ENCODE measurements at regions of chr5 and their contacts with region 1.

Region 1: GRCh38 chr5:32489791-32490582 is 45.4 kb upstream of the ZFR start:
- DNase-seq: peak; percentile 19
- ATAC-seq: peak; percentile 95
- H3K4me3 ChIP-seq: no peak overlapping the region
- H3K27ac ChIP-seq: no peak overlapping the region
- H3K4me1 ChIP-seq: no peaks in the 10 kb centered on the region
- H3K27me3 ChIP-seq: no peaks in the 10 kb centered on the region
- CTCF ChIP-seq: peak; percentile 67 to 81 (median 74)
- EP300 ChIP-seq: no peak
- POLR2A ChIP-seq: no peak
- RAD21 ChIP-seq: peak; percentile 96

Region 2: GRCh38 chr5:32346869-32347268 is 143.1 kb before region 1 on chr5:
- CTCF ChIA-PET with region 1: no interaction called
- POLR2A ChIA-PET with region 1: no interaction called
- RAD21 ChIA-PET with region 1: no interaction called
- SMC1A ChIA-PET with region 1: no interaction called
- in situ Hi-C with region 1: no loop called
- intact Hi-C with region 1: no loop called
- DNase-seq: no peak
- ATAC-seq: no peak
- H3K4me3 ChIP-seq: no peak overlapping the region
- H3K27ac ChIP-seq: no peak overlapping the region
- H3K4me1 ChIP-seq: no peaks in the 10 kb centered on the region
- H3K27me3 ChIP-seq: no peaks in the 10 kb centered on the region
- CTCF ChIP-seq: no peak
- EP300 ChIP-seq: no peak
- POLR2A ChIP-seq: no peak
- RAD21 ChIP-seq: no peak

Region 3: DNA sequence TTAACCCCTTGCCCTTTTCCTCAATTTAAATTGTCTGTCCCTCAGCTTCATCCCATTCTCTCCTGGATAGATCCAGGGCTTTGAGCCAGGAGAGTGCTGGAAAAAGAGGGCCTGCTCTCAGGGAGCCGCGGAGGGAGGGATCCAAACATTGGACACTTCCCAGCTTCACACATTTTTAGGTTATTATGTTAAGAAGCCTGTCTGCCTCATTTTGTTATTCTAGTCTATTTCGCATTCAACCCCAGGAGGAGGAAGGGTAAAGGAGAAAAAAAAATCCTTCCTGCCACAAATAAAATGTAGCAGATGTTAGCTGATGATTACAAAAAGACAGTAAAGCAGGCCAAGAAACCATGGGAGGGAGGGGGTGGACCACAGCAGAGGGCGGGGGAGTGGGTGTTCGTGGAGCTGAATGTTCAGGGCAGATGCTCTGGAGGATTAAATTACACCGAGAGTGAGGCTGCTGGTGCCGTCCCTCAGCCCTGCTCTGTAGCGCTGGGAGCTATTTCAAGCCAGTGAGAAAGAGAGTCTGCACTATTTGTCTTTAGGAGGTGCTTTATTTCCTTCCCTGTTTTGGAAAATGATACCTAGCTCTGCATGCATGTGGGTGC is 15.1 kb after region 1 on chr5:
- CTCF ChIA-PET with region 1: interaction called, 40 read pairs
- POLR2A ChIA-PET with region 1: no interaction called
- RAD21 ChIA-PET with region 1: interaction called, 6 read pairs
- SMC1A ChIA-PET with region 1: interaction called, 17 read pairs
- in situ Hi-C with region 1: no loop called
- intact Hi-C with region 1: no loop called
- DNase-seq: no peak
- ATAC-seq: peak; percentile 53
- H3K4me3 ChIP-seq: no peak overlapping the region
- H3K27ac ChIP-seq: no peak overlapping the region
- H3K4me1 ChIP-seq: peaks cover 9% of the 10 kb centered on the region
- H3K27me3 ChIP-seq: peaks cover 0 to 7% of the 10 kb centered on the region in 2 experiments; a peak in 1 of 4 replicates
- CTCF ChIP-seq: no peak
- EP300 ChIP-seq: no peak
- POLR2A ChIP-seq: no peak
- RAD21 ChIP-seq: no peak

Region 4: GRCh38 chr5:32531885-32532520 is 42.0 kb after region 1 on chr5:
- CTCF ChIA-PET with region 1: interaction called, 25 read pairs
- POLR2A ChIA-PET with region 1: interaction called, 6 read pairs
- RAD21 ChIA-PET with region 1: interaction called, 17 read pairs
- SMC1A ChIA-PET with region 1: interaction called, 44 read pairs
- in situ Hi-C with region 1: no loop called
- intact Hi-C with region 1: loop called (anchors 1 kb)
- DNase-seq: peak; percentile 60
- ATAC-seq: peak; percentile 79
- H3K4me3 ChIP-seq: peak overlapping the region; percentile 70
- H3K27ac ChIP-seq: peak overlapping the region; percentile 77
- H3K4me1 ChIP-seq: peaks cover 33% of the 10 kb centered on the region
- H3K27me3 ChIP-seq: no peaks in the 10 kb centered on the region
- CTCF ChIP-seq: no peak
- EP300 ChIP-seq: no peak
- POLR2A ChIP-seq: no peak; the same call in 1 of the 2 replicates
- RAD21 ChIP-seq: no peak

Region 5: DNA sequence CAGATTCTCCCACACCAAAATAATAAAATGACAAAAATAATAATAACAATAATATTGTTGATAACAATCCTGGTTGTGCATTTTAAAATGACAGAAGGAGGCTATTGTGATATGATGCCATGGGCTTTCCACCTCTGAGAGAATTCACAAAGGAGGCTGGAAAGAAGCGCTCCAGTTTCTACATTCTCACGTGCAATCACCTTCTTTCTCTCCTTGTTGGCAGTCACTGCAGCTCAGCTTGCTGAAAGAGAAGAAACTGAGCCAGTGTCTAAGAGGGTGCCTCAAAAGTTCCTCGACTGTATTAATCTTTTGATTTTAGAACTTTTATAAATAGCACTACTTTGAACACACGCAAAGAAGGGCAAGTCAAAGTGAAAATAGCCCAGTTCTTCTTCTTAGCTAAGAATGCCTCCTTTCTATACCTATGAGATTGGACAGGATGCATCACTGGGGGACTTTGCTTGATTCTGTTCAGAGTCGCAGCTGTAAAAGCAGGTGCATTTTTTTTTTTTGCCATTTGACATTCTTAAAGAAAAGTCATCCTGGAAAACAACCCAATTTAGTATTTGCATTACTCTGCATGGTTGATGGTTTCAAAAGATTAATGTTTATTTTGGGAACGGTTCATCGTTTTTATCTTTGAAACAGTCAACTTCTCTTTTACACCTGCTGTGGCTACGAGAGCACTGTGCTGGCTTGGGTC is 82.9 kb after region 1 on chr5:
- CTCF ChIA-PET with region 1: interaction called, 27 read pairs
- POLR2A ChIA-PET with region 1: interaction called, 3 read pairs
- RAD21 ChIA-PET with region 1: interaction called, 13 read pairs
- SMC1A ChIA-PET with region 1: interaction called, 12 read pairs
- in situ Hi-C with region 1: no loop called
- intact Hi-C with region 1: no loop called
- DNase-seq: peak; percentile 91
- ATAC-seq: peak; percentile 82
- H3K4me3 ChIP-seq: 0 out of 2 replicates have a peak overlapping the region, but pooled peaks have one; percentile 50
- H3K27ac ChIP-seq: peak overlapping the region; percentile 79
- H3K4me1 ChIP-seq: peaks cover 58% of the 10 kb centered on the region
- H3K27me3 ChIP-seq: no peaks in the 10 kb centered on the region
- CTCF ChIP-seq: no peak; a peak in 1 of 6 replicates
- EP300 ChIP-seq: peak; percentile 92 to 95
- POLR2A ChIP-seq: no peak
- RAD21 ChIP-seq: peak; percentile 34

Region 6: GRCh38 chr5:32600057-32600622 is 110.2 kb after region 1 on chr5:
- CTCF ChIA-PET with region 1: interaction called, 19 read pairs
- POLR2A ChIA-PET with region 1: interaction called, 6 read pairs
- RAD21 ChIA-PET with region 1: interaction called, 3 read pairs
- SMC1A ChIA-PET with region 1: interaction called, 36 read pairs
- in situ Hi-C with region 1: no loop called
- intact Hi-C with region 1: no loop called
- DNase-seq: no peak
- ATAC-seq: no peak
- H3K4me3 ChIP-seq: no peak overlapping the region
- H3K27ac ChIP-seq: no peak overlapping the region
- H3K4me1 ChIP-seq: no peaks in the 10 kb centered on the region; the same call in 1 of the 2 replicates
- H3K27me3 ChIP-seq: no peaks in the 10 kb centered on the region
- CTCF ChIP-seq: no peak
- EP300 ChIP-seq: no peak
- POLR2A ChIP-seq: no peak
- RAD21 ChIP-seq: no peak

Region 7: GRCh38 chr5:32618962-32619361 is 129.0 kb after region 1 on chr5:
- CTCF ChIA-PET with region 1: interaction called, 118 read pairs
- POLR2A ChIA-PET with region 1: interaction called, 3 read pairs
- RAD21 ChIA-PET with region 1: interaction called, 58 read pairs
- SMC1A ChIA-PET with region 1: interaction called, 86 read pairs
- in situ Hi-C with region 1: loop called (anchors 5 kb)
- intact Hi-C with region 1: no loop called
- DNase-seq: no peak
- ATAC-seq: no peak
- H3K4me3 ChIP-seq: no peak overlapping the region
- H3K27ac ChIP-seq: no peak overlapping the region
- H3K4me1 ChIP-seq: no peaks in the 10 kb centered on the region
- H3K27me3 ChIP-seq: no peaks in the 10 kb centered on the region
- CTCF ChIP-seq: no peak
- EP300 ChIP-seq: no peak
- POLR2A ChIP-seq: no peak
- RAD21 ChIP-seq: no peak

Measured in GM12878 (cell line).